Kidney (tissue), 22 donors: ENCODE measurements at regions of chr3 and their contacts with region 1.

Region 1: DNA sequence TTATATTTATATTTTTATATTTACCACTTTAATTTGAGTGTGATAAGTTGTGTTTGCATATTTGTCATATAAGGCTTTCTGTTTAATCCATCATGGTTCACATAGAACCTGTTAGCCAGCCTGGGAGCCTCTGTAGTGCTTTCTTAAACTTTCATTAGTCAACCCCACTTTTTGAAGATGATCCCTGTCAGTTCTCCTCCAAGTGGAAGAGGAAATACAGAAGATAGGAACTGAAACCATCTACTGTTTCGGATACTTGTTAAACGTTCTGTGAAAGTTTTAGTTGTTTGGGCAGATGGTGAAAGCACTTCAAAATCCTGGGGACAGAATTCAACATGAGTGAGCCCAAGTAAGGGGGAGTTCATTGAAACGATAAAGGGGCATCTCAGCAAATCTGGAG is 4.6 kb upstream of the SAMMSON start:
- DNase-seq: no peak
- H3K4me3 ChIP-seq: no peak overlapping the region
- H3K27ac ChIP-seq: no peak overlapping the region
- H3K4me1 ChIP-seq: no peaks in the 10 kb centered on the region
- H3K27me3 ChIP-seq: no peaks in the 10 kb centered on the region
- CTCF ChIP-seq: no peak

Region 2: DNA sequence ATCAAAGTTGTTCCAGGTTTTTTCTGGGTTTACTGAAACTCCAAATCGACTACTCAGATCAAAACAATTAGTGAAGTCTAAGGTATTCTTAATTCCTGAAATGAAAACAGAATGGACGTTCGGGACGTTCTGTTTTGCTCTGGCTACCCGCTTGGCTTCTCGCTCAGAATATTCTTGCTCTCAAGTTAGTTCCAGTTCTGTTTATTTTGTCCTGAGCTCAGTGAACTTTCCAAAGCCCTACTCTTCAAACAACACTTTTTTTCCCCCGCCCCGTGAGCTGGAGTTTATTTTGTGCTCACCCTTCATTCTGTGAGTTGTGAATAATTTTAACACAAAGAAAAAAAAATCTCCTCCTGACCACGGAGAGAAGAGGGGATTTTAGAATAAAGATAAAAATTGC is 77.3 kb after region 1 on chr3:
- intact Hi-C with region 1: loop called (anchors 5 kb)
- DNase-seq: peak in 2 of 5 donors; percentile 23 to 43
- H3K4me3 ChIP-seq: peak overlapping the region; percentile 14 to 43 (median 42)
- H3K27ac ChIP-seq: no peak overlapping the region
- H3K4me1 ChIP-seq: no peaks in the 10 kb centered on the region
- H3K27me3 ChIP-seq: peaks cover 2% of the 10 kb centered on the region
- CTCF ChIP-seq: no peak